ENCODE measurements at regions of chr2 and their contacts with region 1.

Region 1: GRCh38 chr2:8544786-8545694 is 136.8 kb upstream of the ID2 start:
- DNase-seq: peak; percentile 88
- H3K4me3 Mint-ChIP-seq: peak overlapping the region; percentile 25
- H3K27ac Mint-ChIP-seq: peak overlapping the region; percentile 98
- H3K4me1 Mint-ChIP-seq: peaks cover 81% of the 10 kb centered on the region
- H3K27me3 Mint-ChIP-seq: no peaks in the 10 kb centered on the region

Region 2: DNA sequence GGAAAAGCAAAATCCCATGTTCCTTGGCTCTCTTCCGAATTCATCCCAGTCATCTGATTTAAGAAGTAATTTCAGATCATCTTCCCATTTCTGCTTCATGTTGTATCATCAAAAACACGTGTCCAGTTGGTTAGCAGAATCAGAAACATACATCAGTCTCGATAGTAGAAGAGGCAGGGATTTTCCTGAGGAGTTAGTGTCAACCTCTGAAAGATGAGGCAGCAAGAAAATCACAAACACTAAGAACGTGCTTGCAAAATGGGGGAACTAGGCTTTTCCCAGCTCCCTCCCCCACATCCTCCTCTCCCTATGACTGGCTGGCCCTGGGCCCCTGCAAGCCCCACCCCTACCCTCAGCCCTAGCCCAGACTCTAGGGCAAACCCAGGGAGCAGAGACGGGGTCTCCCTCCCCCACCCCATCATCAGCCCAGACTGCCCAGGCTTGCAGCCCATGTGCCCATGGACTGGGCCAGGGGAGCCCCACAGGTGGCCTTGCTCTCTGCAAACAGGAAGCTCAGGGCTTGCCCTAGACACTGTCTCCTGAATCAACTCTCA is 24.2 kb before region 1 on chr2:
- CTCF ChIA-PET with region 1: interaction called, 21 read pairs
- POLR2A ChIA-PET with region 1: no interaction called
- DNase-seq: no peak
- H3K4me3 Mint-ChIP-seq: no peak overlapping the region
- H3K27ac Mint-ChIP-seq: no peak overlapping the region
- H3K4me1 Mint-ChIP-seq: peaks cover 69% of the 10 kb centered on the region
- H3K27me3 Mint-ChIP-seq: no peaks in the 10 kb centered on the region

Region 3: GRCh38 chr2:8534729-8535468 is 10.1 kb before region 1 on chr2:
- CTCF ChIA-PET with region 1: interaction called, 25 read pairs
- POLR2A ChIA-PET with region 1: no interaction called
- DNase-seq: no peak
- H3K4me3 Mint-ChIP-seq: no peak overlapping the region
- H3K27ac Mint-ChIP-seq: no peak overlapping the region
- H3K4me1 Mint-ChIP-seq: peaks cover 28% of the 10 kb centered on the region
- H3K27me3 Mint-ChIP-seq: no peaks in the 10 kb centered on the region

Region 4: DNA sequence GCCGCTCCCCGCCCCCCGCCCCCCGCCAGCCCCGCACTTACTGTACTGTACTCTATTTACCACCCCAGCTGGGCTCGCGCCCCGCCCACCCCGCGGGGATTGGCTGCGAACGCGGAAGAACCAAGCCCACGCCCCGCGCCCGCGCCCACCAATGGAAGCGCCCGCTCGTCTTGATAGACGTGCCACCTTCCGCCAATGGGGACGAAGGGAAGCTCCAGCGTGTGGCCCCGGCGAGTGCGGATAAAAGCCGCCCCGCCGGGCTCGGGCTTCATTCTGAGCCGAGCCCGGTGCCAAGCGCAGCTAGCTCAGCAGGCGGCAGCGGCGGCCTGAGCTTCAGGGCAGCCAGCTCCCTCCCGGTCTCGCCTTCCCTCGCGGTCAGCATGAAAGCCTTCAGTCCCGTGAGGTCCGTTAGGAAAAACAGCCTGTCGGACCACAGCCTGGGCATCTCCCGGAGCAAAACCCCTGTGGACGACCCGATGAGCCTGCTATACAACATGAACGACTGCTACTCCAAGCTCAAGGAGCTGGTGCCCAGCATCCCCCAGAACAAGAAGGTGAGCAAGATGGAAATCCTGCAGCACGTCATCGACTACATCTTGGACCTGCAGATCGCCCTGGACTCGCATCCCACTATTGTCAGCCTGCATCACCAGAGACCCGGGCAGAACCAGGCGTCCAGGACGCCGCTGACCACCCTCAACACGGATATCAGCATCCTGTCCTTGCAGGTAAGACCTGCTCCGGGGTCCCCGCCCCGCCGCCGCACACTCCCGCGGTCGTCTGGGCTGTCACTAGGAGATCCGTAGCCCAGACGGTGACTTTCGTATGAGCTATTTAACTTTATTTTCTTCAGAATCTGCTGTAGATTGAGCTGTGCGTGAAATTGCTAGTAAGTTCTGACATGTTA is 137.0 kb after region 1 on chr2 and contains the start of gene ID2:
- CTCF ChIA-PET with region 1: interaction called, 12 read pairs
- POLR2A ChIA-PET with region 1: interaction called, 17 read pairs
- DNase-seq: peak; percentile 99
- H3K4me3 Mint-ChIP-seq: peak within 1 kb of the TSS; percentile 92
- H3K27ac Mint-ChIP-seq: peak within 1 kb of the TSS; percentile 92
- H3K4me1 Mint-ChIP-seq: peaks cover 49% of the 10 kb centered on the region
- H3K27me3 Mint-ChIP-seq: peaks cover 11% of the 10 kb centered on the region
- total RNA-seq, gene ID2: 126 to 134 TPM